Left colon (tissue), 2 donors: ENCODE measurements at regions of chr12 and their contacts with region 1.

Region 1: DNA sequence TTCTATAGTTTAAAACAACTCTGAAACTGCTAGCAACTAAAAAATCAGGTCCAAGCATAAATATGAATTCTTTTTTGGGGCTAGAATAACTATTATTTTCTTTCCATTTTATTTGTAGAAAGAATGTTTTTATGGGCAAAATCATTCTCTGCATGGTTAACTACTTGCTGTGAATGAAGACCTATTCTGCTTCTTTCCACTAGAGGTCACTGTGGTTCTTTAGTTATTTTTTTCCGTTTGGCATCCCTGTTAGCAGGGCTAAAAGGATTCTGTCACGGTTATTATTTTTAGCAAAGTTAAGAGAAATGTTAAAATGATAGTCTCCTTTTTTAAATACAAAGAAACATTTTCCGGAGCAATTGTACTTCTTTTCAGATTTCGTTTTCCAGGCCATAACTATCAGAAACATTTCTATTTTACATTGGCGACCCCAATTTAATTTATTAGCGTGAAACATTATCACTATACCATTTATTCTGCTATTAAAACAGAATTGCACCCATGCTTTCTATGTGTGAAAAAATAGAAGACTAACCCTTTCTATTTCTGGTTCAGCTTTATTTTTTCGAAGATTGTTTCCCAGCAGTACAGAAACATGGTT is 404.8 kb downstream of the ATP23 start:
- DNase-seq: no peak
- ATAC-seq: no peak

Region 2: DNA sequence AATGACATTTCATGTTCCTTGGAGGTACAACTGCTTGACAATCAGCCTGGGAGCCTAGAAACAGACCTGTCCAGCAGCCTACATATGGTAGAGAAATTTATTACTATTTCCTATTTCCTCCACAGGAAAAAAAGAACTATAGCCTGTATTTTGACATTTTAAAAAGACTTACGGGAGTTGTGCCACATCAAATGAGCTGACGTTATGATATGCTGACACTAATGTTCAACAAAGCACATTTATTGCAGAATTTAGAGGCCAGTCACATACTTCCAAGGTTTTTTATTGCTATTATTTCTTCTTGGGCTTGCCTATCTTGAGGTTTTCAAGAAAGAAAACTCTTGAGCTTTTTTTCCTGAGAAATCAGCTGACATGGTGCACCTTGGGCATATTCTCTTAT is 268.9 kb after region 1 on chr12:
- intact Hi-C with region 1: no loop called
- DNase-seq: no peak
- ATAC-seq: no peak

Region 3: GRCh38 chr12:59093073-59093772 is 747.1 kb after region 1 on chr12:
- intact Hi-C with region 1: loop called in 1 of 2 experiments (anchors 10 kb)
- DNase-seq: no peak
- ATAC-seq: no peak

Region 4: GRCh38 chr12:59149997-59150642 is 804.0 kb after region 1 on chr12:
- intact Hi-C with region 1: loop called in 1 of 2 experiments (anchors 5 kb)
- DNase-seq: no peak
- ATAC-seq: peak; percentile 99